ENCODE measurements at regions of chrX and their contacts with region 1.

Region 1: GRCh38 chrX:65985922-65986588 is 53.8 kb downstream of the VSIG4 start:
- DNase-seq: no peak
- H3K4me3 ChIP-seq: no peak overlapping the region
- H3K27ac ChIP-seq: no peak overlapping the region
- H3K4me1 ChIP-seq: no peaks in the 10 kb centered on the region
- H3K27me3 ChIP-seq: no peaks in the 10 kb centered on the region
- CTCF ChIP-seq: peak; percentile 45 to 60 (median 56)
- EP300 ChIP-seq: no peak
- POLR2A ChIP-seq: no peak

Region 2: GRCh38 chrX:65581661-65582339 is 404.3 kb before region 1 on chrX:
- intact Hi-C with region 1: loop called (anchors 1 kb)
- DNase-seq: no peak
- H3K4me3 ChIP-seq: no peak overlapping the region
- H3K27ac ChIP-seq: no peak overlapping the region
- H3K4me1 ChIP-seq: peaks cover 0 to 9% (median 4%) of the 10 kb centered on the region in 4 donors
- H3K27me3 ChIP-seq: no peaks in the 10 kb centered on the region
- CTCF ChIP-seq: peak; percentile 67 to 75 (median 67)
- EP300 ChIP-seq: no peak
- POLR2A ChIP-seq: no peak

Region 3: GRCh38 chrX:66074920-66075879 is 89.1 kb after region 1 on chrX:
- intact Hi-C with region 1: no loop called
- DNase-seq: no peak
- H3K4me3 ChIP-seq: no peak overlapping the region
- H3K27ac ChIP-seq: no peak overlapping the region
- H3K4me1 ChIP-seq: no peaks in the 10 kb centered on the region
- H3K27me3 ChIP-seq: no peaks in the 10 kb centered on the region
- CTCF ChIP-seq: no peak
- EP300 ChIP-seq: no peak
- POLR2A ChIP-seq: no peak